ENCODE measurements at regions of chr9 and their contacts with region 1.

Region 1: GRCh38 chr9:16575986-16576245 is 294.6 kb downstream of the BNC2 start:
- DNase-seq: no peak
- H3K4me3 ChIP-seq: no peak overlapping the region
- H3K27ac ChIP-seq: peak overlapping the region; percentile 40 to 62 (median 51)
- H3K4me1 ChIP-seq: peaks cover 0 to 63% (median 41%) of the 10 kb centered on the region in 4 donors
- H3K27me3 ChIP-seq: no peaks in the 10 kb centered on the region
- CTCF ChIP-seq: no peak
- EP300 ChIP-seq: no peak
- POLR2A ChIP-seq: no peak

Region 2: DNA sequence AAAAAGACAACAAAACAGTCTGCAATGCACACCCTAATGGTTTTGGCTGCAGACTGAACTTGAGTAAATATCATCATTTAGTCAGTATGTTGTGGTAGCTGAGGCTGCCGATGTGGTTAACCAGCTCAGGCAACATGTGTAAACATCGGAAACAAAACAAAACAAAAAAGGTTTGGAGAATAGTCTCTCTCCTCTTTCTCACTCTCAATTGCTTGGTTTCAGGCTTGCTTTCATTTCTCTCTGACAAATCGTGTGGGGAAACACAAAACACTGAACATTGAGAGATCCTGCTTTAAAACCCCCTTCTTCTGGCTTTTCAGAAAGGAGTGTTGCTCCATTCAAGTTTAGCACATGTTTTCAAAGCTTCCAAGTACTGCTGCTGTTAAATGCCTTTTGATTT is 158.8 kb before region 1 on chr9:
- in situ Hi-C with region 1: no loop called
- intact Hi-C with region 1: no loop called
- DNase-seq: no peak
- H3K4me3 ChIP-seq: no peak overlapping the region
- H3K27ac ChIP-seq: peak overlapping the region; percentile 24 to 41 (median 28)
- H3K4me1 ChIP-seq: peaks cover 3 to 24% (median 5%) of the 10 kb centered on the region in 4 donors
- H3K27me3 ChIP-seq: no peaks in the 10 kb centered on the region
- CTCF ChIP-seq: no peak
- EP300 ChIP-seq: no peak
- POLR2A ChIP-seq: no peak

Region 3: DNA sequence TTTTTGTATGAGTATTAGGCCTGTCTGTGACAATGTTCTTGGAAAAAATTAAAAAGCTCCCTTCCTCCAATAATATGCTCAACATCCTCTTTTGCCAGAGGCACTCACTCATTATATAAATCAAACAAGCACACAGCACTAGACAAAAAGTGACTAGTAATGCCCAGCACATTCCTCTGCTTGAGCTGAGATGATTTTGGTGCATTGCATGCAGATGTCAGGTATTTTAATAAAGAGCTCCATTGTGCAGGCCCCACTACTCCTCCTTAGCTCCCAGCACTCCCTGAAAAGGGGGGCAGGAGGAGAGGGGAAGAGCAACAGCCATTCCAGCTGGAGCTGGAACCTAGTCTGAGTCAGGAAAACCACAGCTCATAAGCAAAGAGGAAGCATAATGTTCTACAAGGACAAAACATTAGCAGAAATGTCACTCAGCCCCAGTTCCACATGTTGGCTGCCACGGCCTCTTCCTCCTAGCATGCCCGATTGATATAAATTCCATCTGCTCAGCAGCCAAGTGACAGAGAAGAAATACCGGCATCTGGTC is 54.0 kb before region 1 on chr9:
- in situ Hi-C with region 1: no loop called
- intact Hi-C with region 1: no loop called
- DNase-seq: peak; percentile 13
- H3K4me3 ChIP-seq: no peak overlapping the region
- H3K27ac ChIP-seq: peak overlapping the region; percentile 57 to 78 (median 68)
- H3K4me1 ChIP-seq: peaks cover 8 to 23% (median 13%) of the 10 kb centered on the region in 4 donors
- H3K27me3 ChIP-seq: no peaks in the 10 kb centered on the region
- CTCF ChIP-seq: no peak
- EP300 ChIP-seq: no peak
- POLR2A ChIP-seq: no peak

Region 4: DNA sequence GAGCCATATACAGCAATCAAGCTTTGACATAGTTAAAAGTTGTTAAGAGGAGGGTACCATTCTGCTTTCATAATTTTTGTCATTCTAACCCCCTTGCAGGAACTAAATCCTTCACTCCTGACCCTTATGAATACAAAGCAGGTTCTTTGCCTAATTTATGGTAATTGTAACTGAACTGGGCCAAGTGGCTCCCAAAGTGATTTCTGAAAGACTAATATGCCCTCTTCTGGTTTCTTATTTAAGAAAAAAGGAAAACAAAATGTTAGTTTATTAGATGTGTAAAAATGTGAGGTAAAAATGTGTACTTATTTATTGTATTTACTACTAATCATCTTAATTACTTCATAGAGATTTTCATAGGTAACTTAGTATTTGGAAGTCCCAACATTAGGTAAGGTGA is 26.1 kb after region 1 on chr9:
- in situ Hi-C with region 1: no loop called
- intact Hi-C with region 1: loop called (anchors 1 kb)
- DNase-seq: no peak
- H3K4me3 ChIP-seq: no peak overlapping the region
- H3K27ac ChIP-seq: no peak overlapping the region
- H3K4me1 ChIP-seq: peaks cover 0 to 8% (median 0%) of the 10 kb centered on the region in 4 donors
- H3K27me3 ChIP-seq: no peaks in the 10 kb centered on the region
- CTCF ChIP-seq: no peak
- EP300 ChIP-seq: no peak
- POLR2A ChIP-seq: no peak